GM10248 (cell line): ENCODE measurements at regions of chr3 and their contacts with region 1.

Region 1: GRCh38 chr3:124834723-124835718 is 52.1 kb downstream of the ITGB5 start:
- DNase-seq: peak; percentile 74
- CTCF ChIP-seq: peak; percentile 17

Region 2: GRCh38 chr3:124818398-124819091 is 16.5 kb before region 1 on chr3:
- CTCF ChIA-PET with region 1: no interaction called
- POLR2A ChIA-PET with region 1: no interaction called
- DNase-seq: no peak
- CTCF ChIP-seq: no peak

Region 3: DNA sequence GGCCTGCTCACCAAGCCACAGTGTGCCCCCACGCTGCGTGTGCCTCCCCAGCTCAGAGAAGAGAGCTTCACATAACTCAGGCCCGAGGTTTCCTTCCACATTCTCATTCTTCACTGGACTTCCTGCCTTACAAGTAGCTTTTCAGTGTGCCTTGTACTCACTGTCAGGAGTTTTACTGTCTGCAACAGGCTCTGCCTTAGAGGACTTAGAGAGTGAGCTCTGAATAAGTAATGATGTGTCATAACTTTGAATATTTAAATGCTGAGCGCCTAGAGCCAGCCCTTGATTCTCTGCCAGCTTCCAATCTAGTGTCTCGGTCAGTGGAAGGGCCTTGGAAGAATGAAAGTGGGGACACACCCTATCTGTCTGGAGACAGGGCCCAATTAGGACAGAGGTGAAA is 10.4 kb after region 1 on chr3:
- CTCF ChIA-PET with region 1: interaction called, 12 read pairs
- POLR2A ChIA-PET with region 1: no interaction called
- DNase-seq: no peak
- CTCF ChIP-seq: no peak

Region 4: GRCh38 chr3:124862006-124862405 is 27.0 kb after region 1 on chr3:
- CTCF ChIA-PET with region 1: no interaction called
- POLR2A ChIA-PET with region 1: no interaction called
- DNase-seq: no peak
- CTCF ChIP-seq: no peak